Activated B cell treated with CpG ODN at 0.5 μM for 24 hours (primary cell): ENCODE measurements at regions of chr6 and their contacts with region 1.

Region 1: GRCh38 chr6:88963139-88964090 is at the start of gene RNGTT:
- DNase-seq: peak; percentile 96
- ATAC-seq: peak; percentile 100
- H3K4me3 Mint-ChIP-seq: peak within 1 kb of the TSS; percentile 99
- H3K27ac Mint-ChIP-seq: peak within 1 kb of the TSS; percentile 95
- H3K4me1 Mint-ChIP-seq: peaks cover 42% of the 10 kb centered on the region
- H3K27me3 Mint-ChIP-seq: no peaks in the 10 kb centered on the region
- CTCF ChIP-seq: no peak
- total RNA-seq, gene RNGTT: 24.8 and 25.9 TPM in 2 replicates

Region 2: GRCh38 chr6:87407901-87408720 is 1555.3 kb before region 1 on chr6 and contains the start of gene CFAP206:
- CTCF ChIA-PET with region 1: no interaction called
- POLR2A ChIA-PET with region 1: no interaction called
- intact Hi-C with region 1: loop called (anchors 1 kb)
- DNase-seq: peak; percentile 80
- ATAC-seq: peak; percentile 80
- H3K4me3 Mint-ChIP-seq: peak within 1 kb of the TSS; percentile 87
- H3K27ac Mint-ChIP-seq: peak within 1 kb of the TSS; percentile 79
- H3K4me1 Mint-ChIP-seq: peaks cover 9% of the 10 kb centered on the region
- H3K27me3 Mint-ChIP-seq: peaks cover 8% of the 10 kb centered on the region
- CTCF ChIP-seq: no peak
- total RNA-seq, gene CFAP206: 0.09 TPM in 1 of 2 replicates, not detected in the other

Region 3: DNA sequence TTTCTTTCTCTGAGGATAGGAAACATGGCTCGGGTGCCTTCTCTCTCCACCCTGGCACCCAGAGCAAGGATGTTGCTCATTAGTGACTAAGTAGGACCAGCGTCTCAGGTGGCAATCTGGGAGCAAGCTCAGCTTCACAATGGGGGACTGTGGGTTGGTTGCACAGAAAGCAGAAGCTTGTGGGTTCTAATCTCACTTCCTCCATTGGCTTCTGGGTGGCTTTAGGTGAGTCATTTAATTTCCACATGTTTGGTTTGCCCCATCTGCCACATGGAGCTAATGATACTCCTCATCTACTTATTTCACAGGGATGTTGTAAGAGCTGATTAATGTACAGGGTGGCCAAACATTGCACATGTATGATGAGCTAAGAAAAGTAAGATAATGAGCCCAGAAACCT is 1206.6 kb before region 1 on chr6:
- CTCF ChIA-PET with region 1: no interaction called
- POLR2A ChIA-PET with region 1: no interaction called
- intact Hi-C with region 1: loop called (anchors 2 kb)
- DNase-seq: peak; percentile 41
- ATAC-seq: peak; percentile 91
- H3K4me3 Mint-ChIP-seq: peak overlapping the region; percentile 46
- H3K27ac Mint-ChIP-seq: peak overlapping the region; percentile 91
- H3K4me1 Mint-ChIP-seq: peaks cover 42% of the 10 kb centered on the region
- H3K27me3 Mint-ChIP-seq: no peaks in the 10 kb centered on the region
- CTCF ChIP-seq: no peak

Region 4: DNA sequence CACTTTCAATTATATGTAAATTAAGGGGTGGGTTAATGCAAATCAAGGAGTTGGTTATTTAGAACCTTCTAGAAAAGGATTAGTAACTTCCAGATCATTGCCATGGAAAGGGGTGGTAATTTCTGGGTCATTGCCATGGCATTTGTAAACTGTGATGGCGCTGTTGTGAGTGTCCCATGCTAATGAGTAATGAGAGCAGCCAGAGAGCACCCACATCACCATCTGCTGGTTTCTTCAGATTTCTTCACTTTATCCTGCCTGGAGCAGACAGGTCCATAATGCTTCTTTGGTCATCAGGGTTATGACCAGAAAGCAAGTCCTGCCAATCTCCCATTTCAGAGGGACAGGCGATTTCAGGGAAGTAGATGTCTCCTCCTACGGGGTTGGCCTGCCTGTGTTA is 486.0 kb before region 1 on chr6:
- CTCF ChIA-PET with region 1: no interaction called
- POLR2A ChIA-PET with region 1: no interaction called
- intact Hi-C with region 1: no loop called
- DNase-seq: no peak
- ATAC-seq: no peak
- H3K4me3 Mint-ChIP-seq: no peak overlapping the region
- H3K27ac Mint-ChIP-seq: no peak overlapping the region
- H3K4me1 Mint-ChIP-seq: no peaks in the 10 kb centered on the region
- H3K27me3 Mint-ChIP-seq: peaks cover 7% of the 10 kb centered on the region
- CTCF ChIP-seq: no peak

Region 5: GRCh38 chr6:88870717-88871330 is 92.6 kb before region 1 on chr6:
- CTCF ChIA-PET with region 1: no interaction called
- POLR2A ChIA-PET with region 1: no interaction called
- intact Hi-C with region 1: no loop called
- DNase-seq: no peak
- ATAC-seq: peak; percentile 42
- H3K4me3 Mint-ChIP-seq: no peak overlapping the region
- H3K27ac Mint-ChIP-seq: no peak overlapping the region
- H3K4me1 Mint-ChIP-seq: peaks cover 10% of the 10 kb centered on the region
- H3K27me3 Mint-ChIP-seq: no peaks in the 10 kb centered on the region
- CTCF ChIP-seq: no peak

Region 6: GRCh38 chr6:89145787-89146646 is 182.6 kb after region 1 on chr6 and contains the start of gene PM20D2:
- CTCF ChIA-PET with region 1: no interaction called
- POLR2A ChIA-PET with region 1: interaction called, 7 read pairs
- intact Hi-C with region 1: loop called (anchors 1 kb)
- DNase-seq: peak; percentile 72
- ATAC-seq: peak; percentile 78
- H3K4me3 Mint-ChIP-seq: peak within 1 kb of the TSS; percentile 90
- H3K27ac Mint-ChIP-seq: peak within 1 kb of the TSS; percentile 92
- H3K4me1 Mint-ChIP-seq: peaks cover 22% of the 10 kb centered on the region
- H3K27me3 Mint-ChIP-seq: no peaks in the 10 kb centered on the region
- CTCF ChIP-seq: no peak
- total RNA-seq, gene PM20D2: 10.9 and 11.6 TPM in 2 replicates

Region 7: GRCh38 chr6:89172131-89172530 is 208.7 kb after region 1 on chr6:
- CTCF ChIA-PET with region 1: no interaction called
- POLR2A ChIA-PET with region 1: no interaction called
- intact Hi-C with region 1: no loop called
- DNase-seq: no peak
- ATAC-seq: no peak
- H3K4me3 Mint-ChIP-seq: no peak overlapping the region
- H3K27ac Mint-ChIP-seq: no peak overlapping the region
- H3K4me1 Mint-ChIP-seq: no peaks in the 10 kb centered on the region
- H3K27me3 Mint-ChIP-seq: no peaks in the 10 kb centered on the region
- CTCF ChIP-seq: no peak

Region 8: GRCh38 chr6:89829591-89830385 is 866.4 kb after region 1 on chr6 and contains the start of gene CASP8AP2:
- CTCF ChIA-PET with region 1: no interaction called
- POLR2A ChIA-PET with region 1: interaction called, 6 read pairs
- intact Hi-C with region 1: loop called (anchors 5 kb)
- DNase-seq: peak; percentile 76
- ATAC-seq: peak; percentile 93
- H3K4me3 Mint-ChIP-seq: peak within 1 kb of the TSS; percentile 99
- H3K27ac Mint-ChIP-seq: peak within 1 kb of the TSS; percentile 96
- H3K4me1 Mint-ChIP-seq: peaks cover 37% of the 10 kb centered on the region
- H3K27me3 Mint-ChIP-seq: no peaks in the 10 kb centered on the region
- CTCF ChIP-seq: no peak
- total RNA-seq, gene CASP8AP2: 17.1 and 17.8 TPM in 2 replicates